SK-N-SH (cell line): ENCODE measurements at regions of chr10 and their contacts with region 1.

Region 1: GRCh38 chr10:118459726-118460193 is 117.6 kb upstream of the FAM204A start:
- DNase-seq: peak; percentile 63
- H3K4me3 ChIP-seq: peak overlapping the region in 1 of 2 experiments; percentile 12; a peak in 1 of 4 replicates
- H3K27ac ChIP-seq: no peak overlapping the region
- H3K4me1 ChIP-seq: no peaks in the 10 kb centered on the region; a peak in 2 of 4 replicates
- H3K27me3 ChIP-seq: no peaks in the 10 kb centered on the region
- CTCF ChIP-seq: peak; percentile 78
- EP300 ChIP-seq: no peak
- RAD21 ChIP-seq: peak; percentile 86

Region 2: DNA sequence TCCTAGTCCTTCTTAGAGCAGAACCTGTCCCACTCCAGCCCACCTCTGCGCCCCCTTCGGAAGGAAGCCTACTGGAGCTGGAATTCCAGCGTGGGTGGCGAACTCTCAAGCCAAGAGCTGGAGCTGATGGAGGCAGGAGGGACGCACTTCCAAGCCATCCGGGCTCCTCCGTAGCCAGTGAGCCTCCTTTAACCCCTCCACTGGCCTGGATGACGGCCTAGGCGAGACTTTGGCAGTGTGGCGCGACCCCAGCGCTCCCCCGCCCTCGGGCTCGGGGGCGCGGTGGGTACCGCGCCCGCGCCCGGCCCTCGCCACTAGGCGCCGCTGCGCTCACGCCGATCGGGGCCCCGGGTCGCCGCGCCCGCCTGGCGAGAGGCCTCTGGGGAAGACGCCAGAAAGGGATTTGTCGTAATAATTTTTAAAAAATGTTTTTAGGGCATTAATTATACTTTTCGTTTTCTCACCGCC is 922.3 kb before region 1 on chr10:
- CTCF ChIA-PET with region 1: interaction called, 13 read pairs
- POLR2A ChIA-PET with region 1: no interaction called
- DNase-seq: peak; percentile 93
- H3K4me3 ChIP-seq: peak overlapping the region in 1 of 2 experiments; percentile 37; a peak in 1 of 4 replicates
- H3K27ac ChIP-seq: no peak overlapping the region
- H3K4me1 ChIP-seq: peaks cover 0 to 21% of the 10 kb centered on the region in 2 experiments; a peak in 2 of 4 replicates
- H3K27me3 ChIP-seq: peaks cover 89% of the 10 kb centered on the region
- CTCF ChIP-seq: peak; percentile 65
- EP300 ChIP-seq: no peak
- RAD21 ChIP-seq: peak; percentile 72

Region 3: DNA sequence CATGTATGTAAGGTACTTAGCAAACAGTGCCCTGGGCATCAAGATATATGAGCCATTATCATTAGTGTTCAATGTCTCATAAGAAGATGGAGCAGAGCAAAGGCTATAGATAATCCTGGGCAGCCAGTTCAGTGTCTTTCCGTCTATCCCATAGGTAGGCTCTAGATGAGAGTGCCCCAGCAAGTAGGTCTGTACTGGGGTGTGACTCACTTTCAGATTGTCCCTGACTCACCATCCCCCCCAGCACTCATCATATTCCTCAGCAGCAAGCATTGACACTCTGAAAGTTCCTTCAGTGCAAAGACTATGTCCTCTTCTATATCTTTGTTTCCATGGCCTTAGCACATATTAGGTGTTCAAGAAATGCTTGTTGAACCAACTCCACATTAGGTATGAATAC is 97.7 kb before region 1 on chr10:
- CTCF ChIA-PET with region 1: no interaction called
- POLR2A ChIA-PET with region 1: no interaction called
- DNase-seq: no peak
- H3K4me3 ChIP-seq: no peak overlapping the region
- H3K27ac ChIP-seq: no peak overlapping the region
- H3K4me1 ChIP-seq: no peaks in the 10 kb centered on the region
- H3K27me3 ChIP-seq: no peaks in the 10 kb centered on the region
- CTCF ChIP-seq: no peak
- EP300 ChIP-seq: no peak
- RAD21 ChIP-seq: no peak

Region 4: DNA sequence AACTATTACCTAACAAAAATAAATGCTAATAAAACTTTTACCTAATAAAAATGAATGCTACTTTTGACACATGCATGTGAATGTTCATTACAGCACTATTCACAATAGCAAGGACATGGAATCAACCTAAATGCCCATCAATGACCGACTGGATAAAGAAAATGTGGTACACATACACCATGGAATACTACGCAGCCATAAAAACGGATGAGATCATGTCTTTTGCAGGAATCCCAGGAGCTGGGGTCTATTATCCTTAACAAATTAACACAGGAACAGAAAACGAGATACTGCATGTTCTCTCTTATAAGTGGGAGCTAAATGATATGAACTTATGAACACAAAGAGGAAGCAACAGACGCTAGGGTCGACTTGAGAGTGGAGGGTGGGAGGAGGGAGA is 29.6 kb before region 1 on chr10:
- CTCF ChIA-PET with region 1: interaction called, 21 read pairs
- POLR2A ChIA-PET with region 1: no interaction called
- DNase-seq: no peak
- H3K4me3 ChIP-seq: no peak overlapping the region
- H3K27ac ChIP-seq: no peak overlapping the region
- H3K4me1 ChIP-seq: no peaks in the 10 kb centered on the region
- H3K27me3 ChIP-seq: no peaks in the 10 kb centered on the region
- CTCF ChIP-seq: no peak
- EP300 ChIP-seq: no peak
- RAD21 ChIP-seq: no peak

Region 5: DNA sequence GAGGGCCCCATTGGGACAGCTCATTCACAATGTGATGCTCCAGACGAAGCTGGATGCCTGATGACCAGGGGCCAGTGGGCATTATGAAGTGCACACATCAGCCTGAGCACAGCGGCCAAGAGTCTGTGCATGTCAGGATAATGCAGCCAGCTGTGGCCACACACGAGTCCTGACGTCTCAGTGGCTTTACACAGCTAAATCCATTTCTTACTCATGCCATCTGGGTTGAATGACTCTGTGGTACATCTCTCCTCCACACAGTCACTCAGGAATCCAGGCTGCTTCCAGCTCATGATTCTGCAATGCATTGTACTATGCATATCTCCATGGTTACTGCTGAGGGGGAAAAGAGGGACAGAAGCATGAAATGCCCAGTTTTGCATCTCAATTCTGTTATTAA is 12.1 kb after region 1 on chr10:
- CTCF ChIA-PET with region 1: interaction called, 40 read pairs
- POLR2A ChIA-PET with region 1: no interaction called
- DNase-seq: no peak
- H3K4me3 ChIP-seq: no peak overlapping the region
- H3K27ac ChIP-seq: no peak overlapping the region
- H3K4me1 ChIP-seq: no peaks in the 10 kb centered on the region; a peak in 1 of 4 replicates
- H3K27me3 ChIP-seq: no peaks in the 10 kb centered on the region
- CTCF ChIP-seq: no peak
- EP300 ChIP-seq: no peak
- RAD21 ChIP-seq: no peak

Region 6: GRCh38 chr10:118543714-118544400 is 84.1 kb after region 1 on chr10:
- CTCF ChIA-PET with region 1: interaction called, 34 read pairs
- POLR2A ChIA-PET with region 1: no interaction called
- DNase-seq: peak; percentile 64
- H3K4me3 ChIP-seq: no peak overlapping the region
- H3K27ac ChIP-seq: no peak overlapping the region
- H3K4me1 ChIP-seq: no peaks in the 10 kb centered on the region; a peak in 1 of 4 replicates
- H3K27me3 ChIP-seq: no peaks in the 10 kb centered on the region; the same call in 1 of the 2 replicates
- CTCF ChIP-seq: peak; percentile 51
- EP300 ChIP-seq: no peak
- RAD21 ChIP-seq: peak; percentile 78